CD8-positive, alpha-beta T cell (primary cell): ENCODE measurements at regions of chr9 and their contacts with region 1.

Region 1: GRCh38 chr9:124940693-124941453 is at the start of gene GOLGA1:
- DNase-seq: peak; percentile 85 to 96 (median 92)
- ATAC-seq: peak; percentile 86
- H3K4me3 ChIP-seq: peak within 1 kb of the TSS; percentile 63 to 97
- H3K4me3 Mint-ChIP-seq: peak within 1 kb of the TSS; percentile 91
- H3K27ac ChIP-seq: peak within 1 kb of the TSS; percentile 93 to 97
- H3K27ac Mint-ChIP-seq: peak within 1 kb of the TSS; percentile 96
- H3K4me1 ChIP-seq: peaks cover 15% of the 10 kb centered on the region
- H3K4me1 Mint-ChIP-seq: peaks cover 31% of the 10 kb centered on the region
- H3K27me3 ChIP-seq: no peaks in the 10 kb centered on the region
- H3K27me3 Mint-ChIP-seq: no peaks in the 10 kb centered on the region
- CTCF ChIP-seq: no peak
- total RNA-seq, gene GOLGA1: 12.6 to 13.6 TPM

Region 2: GRCh38 chr9:124721109-124721906 is 219.6 kb before region 1 on chr9:
- CTCF ChIA-PET with region 1: no interaction called
- POLR2A ChIA-PET with region 1: no interaction called
- intact Hi-C with region 1: no loop called
- DNase-seq: no peak
- ATAC-seq: no peak
- H3K4me3 ChIP-seq: no peak overlapping the region
- H3K4me3 Mint-ChIP-seq: no peak overlapping the region
- H3K27ac ChIP-seq: no peak overlapping the region
- H3K27ac Mint-ChIP-seq: no peak overlapping the region
- H3K4me1 ChIP-seq: no peaks in the 10 kb centered on the region
- H3K4me1 Mint-ChIP-seq: no peaks in the 10 kb centered on the region
- H3K27me3 ChIP-seq: no peaks in the 10 kb centered on the region
- H3K27me3 Mint-ChIP-seq: no peaks in the 10 kb centered on the region
- CTCF ChIP-seq: no peak

Region 3: DNA sequence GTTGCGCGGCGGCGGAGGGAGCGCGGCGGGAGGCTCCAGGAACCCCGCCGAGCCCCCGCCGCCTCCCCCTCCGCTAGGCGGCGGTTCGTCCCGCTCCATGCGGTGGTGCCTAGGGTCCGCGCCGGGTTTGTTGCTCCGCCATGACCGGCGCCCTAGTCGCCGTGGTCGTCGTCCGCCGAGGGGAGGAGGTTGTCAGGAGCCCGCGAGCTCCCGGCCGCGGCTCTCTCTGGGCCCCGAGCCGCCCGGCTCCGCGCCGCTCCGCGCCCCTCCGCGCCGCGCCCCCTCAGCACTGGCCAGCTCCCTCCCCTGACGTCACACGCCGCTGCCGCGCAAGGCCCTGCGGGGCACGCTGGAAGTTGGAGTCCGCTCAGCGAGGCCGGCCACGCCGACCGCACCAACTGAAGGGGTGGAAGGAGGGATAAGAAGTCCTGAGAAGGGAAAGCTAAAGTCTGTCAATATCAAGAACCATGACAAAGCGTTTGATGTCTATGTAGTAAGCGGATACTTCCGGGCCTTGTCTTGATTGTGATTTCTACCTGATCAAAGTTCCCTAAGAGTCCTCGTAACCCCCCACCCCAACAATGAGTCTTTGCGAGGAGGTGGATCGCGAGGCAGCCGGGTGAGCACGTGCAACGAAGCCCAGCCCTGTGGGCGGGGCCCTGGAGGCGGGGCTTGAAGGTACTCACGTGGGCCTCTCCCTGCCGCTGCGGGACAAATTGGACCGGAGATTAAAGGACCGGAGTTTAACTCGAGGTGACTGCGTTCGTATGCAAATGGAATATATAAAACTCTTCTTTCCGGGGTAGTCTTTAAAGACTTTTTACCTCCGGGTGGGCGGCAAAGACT is 169.6 kb before region 1 on chr9 and contains the start of gene NR6A1:
- CTCF ChIA-PET with region 1: no interaction called
- POLR2A ChIA-PET with region 1: no interaction called
- intact Hi-C with region 1: loop called (anchors 1 kb)
- DNase-seq: peak; percentile 86 to 97 (median 92)
- ATAC-seq: peak; percentile 90
- H3K4me3 ChIP-seq: peak within 1 kb of the TSS; percentile 59 to 67
- H3K4me3 Mint-ChIP-seq: peak within 1 kb of the TSS; percentile 89
- H3K27ac ChIP-seq: peak within 1 kb of the TSS in 1 of 2 experiments; percentile 58
- H3K27ac Mint-ChIP-seq: peak within 1 kb of the TSS; percentile 82
- H3K4me1 ChIP-seq: peaks cover 21% of the 10 kb centered on the region
- H3K4me1 Mint-ChIP-seq: peaks cover 39% of the 10 kb centered on the region
- H3K27me3 ChIP-seq: peaks cover 24 to 43% of the 10 kb centered on the region in 2 experiments
- H3K27me3 Mint-ChIP-seq: peaks cover 73% of the 10 kb centered on the region
- CTCF ChIP-seq: no peak
- total RNA-seq, gene NR6A1: not detected

Region 4: DNA sequence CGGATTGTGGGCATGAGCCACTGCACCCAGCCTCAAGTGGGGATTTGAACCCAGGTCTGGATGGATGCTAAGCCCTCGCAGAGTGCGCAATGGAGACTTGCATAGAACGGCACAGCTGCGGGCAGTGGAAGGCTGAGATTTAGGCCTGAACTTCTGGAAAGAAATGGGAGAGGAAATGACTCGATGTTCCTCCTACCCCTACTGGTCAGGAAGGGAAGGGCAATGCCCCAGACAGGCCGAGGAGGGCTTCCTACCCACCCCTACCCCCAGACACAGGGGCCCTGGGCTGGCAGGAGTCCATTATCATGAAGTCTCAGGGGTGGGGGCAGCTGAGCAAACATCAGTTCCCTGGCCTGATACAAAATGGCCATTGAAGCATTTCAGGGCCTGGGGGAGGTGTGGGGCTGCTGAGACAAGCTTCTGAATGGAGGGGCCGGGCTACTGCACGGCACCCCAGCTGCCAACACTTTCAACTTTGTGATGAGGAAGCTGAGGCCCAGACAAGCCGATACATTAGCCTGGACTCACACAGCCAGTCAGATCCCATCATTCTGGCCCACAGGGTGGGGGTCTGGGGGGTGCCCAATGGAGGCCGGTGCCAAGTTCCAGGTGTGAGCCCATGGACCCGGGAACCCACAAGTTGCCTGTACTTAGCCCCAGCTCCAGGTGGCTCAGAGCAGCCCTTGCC is 101.1 kb before region 1 on chr9:
- CTCF ChIA-PET with region 1: no interaction called
- POLR2A ChIA-PET with region 1: no interaction called
- intact Hi-C with region 1: no loop called
- DNase-seq: no peak
- ATAC-seq: no peak
- H3K4me3 ChIP-seq: no peak overlapping the region
- H3K4me3 Mint-ChIP-seq: no peak overlapping the region
- H3K27ac ChIP-seq: no peak overlapping the region
- H3K27ac Mint-ChIP-seq: no peak overlapping the region
- H3K4me1 ChIP-seq: no peaks in the 10 kb centered on the region
- H3K4me1 Mint-ChIP-seq: no peaks in the 10 kb centered on the region
- H3K27me3 ChIP-seq: peaks cover 0 to 3% of the 10 kb centered on the region in 2 experiments
- H3K27me3 Mint-ChIP-seq: peaks cover 21% of the 10 kb centered on the region
- CTCF ChIP-seq: peak; percentile 28

Region 5: GRCh38 chr9:124868511-124869465 is 72.1 kb before region 1 on chr9:
- CTCF ChIA-PET with region 1: no interaction called
- POLR2A ChIA-PET with region 1: interaction called, 3 read pairs
- intact Hi-C with region 1: loop called (anchors 1 to 2 kb)
- DNase-seq: peak; percentile 82 to 94 (median 88)
- ATAC-seq: peak; percentile 66
- H3K4me3 ChIP-seq: peak overlapping the region; percentile 76 to 79
- H3K4me3 Mint-ChIP-seq: peak overlapping the region; percentile 95
- H3K27ac ChIP-seq: peak overlapping the region; percentile 81 to 94
- H3K27ac Mint-ChIP-seq: peak overlapping the region; percentile 97
- H3K4me1 ChIP-seq: peaks cover 42% of the 10 kb centered on the region
- H3K4me1 Mint-ChIP-seq: peaks cover 51% of the 10 kb centered on the region
- H3K27me3 ChIP-seq: no peaks in the 10 kb centered on the region
- H3K27me3 Mint-ChIP-seq: no peaks in the 10 kb centered on the region
- CTCF ChIP-seq: no peak

Region 6: DNA sequence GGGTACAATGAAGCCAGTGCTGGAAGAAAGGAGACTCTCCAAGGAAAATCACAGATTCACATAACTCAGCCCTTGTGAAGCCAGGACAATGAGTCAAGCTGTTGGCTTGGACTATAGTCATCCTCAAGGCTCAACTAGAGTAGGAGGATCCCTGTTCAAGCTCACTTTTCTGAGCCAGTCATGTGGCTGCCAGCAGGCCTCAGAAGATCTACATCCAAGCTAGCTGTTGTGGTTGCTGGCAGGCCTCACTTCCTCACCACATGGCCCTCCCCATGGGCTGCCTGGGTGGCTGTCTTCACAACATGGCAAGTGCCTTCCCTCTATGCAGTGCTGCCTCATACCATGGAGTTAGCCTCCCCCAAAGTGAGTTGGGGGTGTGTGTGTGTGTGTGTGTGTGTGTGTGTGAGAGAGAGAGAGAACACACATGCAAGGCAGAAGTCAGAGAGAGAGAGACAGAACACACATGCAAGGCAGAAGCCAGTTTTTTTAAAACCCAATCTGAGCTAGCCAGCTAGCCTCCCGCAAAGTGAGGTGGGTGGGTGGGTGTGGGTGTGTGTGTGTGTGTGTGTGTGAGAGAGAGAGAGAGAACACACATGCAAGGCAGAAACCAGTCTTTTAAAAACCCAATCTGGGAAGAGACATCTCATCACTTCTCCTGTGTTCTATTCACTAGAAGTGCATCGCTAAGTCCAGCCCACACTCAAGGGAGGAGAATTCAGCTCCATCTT is 185.3 kb after region 1 on chr9:
- CTCF ChIA-PET with region 1: no interaction called
- POLR2A ChIA-PET with region 1: interaction called, 4 read pairs
- intact Hi-C with region 1: loop called (anchors 1 to 10 kb)
- DNase-seq: peak; percentile 65 to 95 (median 82)
- ATAC-seq: peak; percentile 99
- H3K4me3 ChIP-seq: no peak overlapping the region
- H3K4me3 Mint-ChIP-seq: peak overlapping the region; percentile 61
- H3K27ac ChIP-seq: peak overlapping the region in 1 of 2 experiments; percentile 42
- H3K27ac Mint-ChIP-seq: peak overlapping the region; percentile 91
- H3K4me1 ChIP-seq: peaks cover 23% of the 10 kb centered on the region
- H3K4me1 Mint-ChIP-seq: peaks cover 36% of the 10 kb centered on the region
- H3K27me3 ChIP-seq: no peaks in the 10 kb centered on the region
- H3K27me3 Mint-ChIP-seq: no peaks in the 10 kb centered on the region
- CTCF ChIP-seq: no peak

Region 7: GRCh38 chr9:125189361-125190289 is 248.8 kb after region 1 on chr9 and contains the start of gene PPP6C:
- CTCF ChIA-PET with region 1: no interaction called
- POLR2A ChIA-PET with region 1: interaction called, 3 read pairs
- intact Hi-C with region 1: loop called (anchors 1 to 2 kb)
- DNase-seq: peak; percentile 94 to 99 (median 97)
- ATAC-seq: peak; percentile 95
- H3K4me3 ChIP-seq: peak within 1 kb of the TSS; percentile 98
- H3K4me3 Mint-ChIP-seq: peak within 1 kb of the TSS; percentile 97
- H3K27ac ChIP-seq: peak within 1 kb of the TSS; percentile 97 to 98
- H3K27ac Mint-ChIP-seq: peak within 1 kb of the TSS; percentile 93
- H3K4me1 ChIP-seq: peaks cover 56% of the 10 kb centered on the region
- H3K4me1 Mint-ChIP-seq: peaks cover 71% of the 10 kb centered on the region
- H3K27me3 ChIP-seq: no peaks in the 10 kb centered on the region
- H3K27me3 Mint-ChIP-seq: no peaks in the 10 kb centered on the region
- CTCF ChIP-seq: peak; percentile 63
- total RNA-seq, gene PPP6C: 37.8 to 38.3 TPM

Region 8: GRCh38 chr9:125261501-125262293 is 320.8 kb after region 1 on chr9 and contains the start of gene GAPVD1:
- CTCF ChIA-PET with region 1: no interaction called
- POLR2A ChIA-PET with region 1: no interaction called
- intact Hi-C with region 1: loop called in 1 of 2 experiments (anchors 2 kb)
- DNase-seq: peak; percentile 72 to 94 (median 86)
- ATAC-seq: peak; percentile 92
- H3K4me3 ChIP-seq: peak within 1 kb of the TSS; percentile 90 to 99
- H3K4me3 Mint-ChIP-seq: peak within 1 kb of the TSS; percentile 98
- H3K27ac ChIP-seq: peak within 1 kb of the TSS; percentile 67 to 78
- H3K27ac Mint-ChIP-seq: peak within 1 kb of the TSS; percentile 94
- H3K4me1 ChIP-seq: peaks cover 29% of the 10 kb centered on the region
- H3K4me1 Mint-ChIP-seq: peaks cover 49% of the 10 kb centered on the region
- H3K27me3 ChIP-seq: no peaks in the 10 kb centered on the region
- H3K27me3 Mint-ChIP-seq: peaks cover 2% of the 10 kb centered on the region
- CTCF ChIP-seq: peak; percentile 54
- total RNA-seq, gene GAPVD1: 81.0 to 84.1 TPM

Region 9: GRCh38 chr9:126804696-126805545 is 1864.0 kb after region 1 on chr9 and contains the start of gene ZBTB43:
- CTCF ChIA-PET with region 1: no interaction called
- POLR2A ChIA-PET with region 1: no interaction called
- intact Hi-C with region 1: loop called in 1 of 2 experiments (anchors 10 kb)
- DNase-seq: peak; percentile 97 to 99 (median 99)
- ATAC-seq: peak; percentile 82
- H3K4me3 ChIP-seq: peak within 1 kb of the TSS; percentile 83 to 85
- H3K4me3 Mint-ChIP-seq: peak within 1 kb of the TSS; percentile 98
- H3K27ac ChIP-seq: peak within 1 kb of the TSS; percentile 87 to 93
- H3K27ac Mint-ChIP-seq: peak within 1 kb of the TSS; percentile 99
- H3K4me1 ChIP-seq: peaks cover 32% of the 10 kb centered on the region
- H3K4me1 Mint-ChIP-seq: peaks cover 43% of the 10 kb centered on the region
- H3K27me3 ChIP-seq: no peaks in the 10 kb centered on the region
- H3K27me3 Mint-ChIP-seq: no peaks in the 10 kb centered on the region
- CTCF ChIP-seq: no peak
- total RNA-seq, gene ZBTB43: 55.7 to 65.0 TPM